Calu3 (cell line): ENCODE measurements at regions of chr21 and their contacts with region 1.

Region 1: DNA sequence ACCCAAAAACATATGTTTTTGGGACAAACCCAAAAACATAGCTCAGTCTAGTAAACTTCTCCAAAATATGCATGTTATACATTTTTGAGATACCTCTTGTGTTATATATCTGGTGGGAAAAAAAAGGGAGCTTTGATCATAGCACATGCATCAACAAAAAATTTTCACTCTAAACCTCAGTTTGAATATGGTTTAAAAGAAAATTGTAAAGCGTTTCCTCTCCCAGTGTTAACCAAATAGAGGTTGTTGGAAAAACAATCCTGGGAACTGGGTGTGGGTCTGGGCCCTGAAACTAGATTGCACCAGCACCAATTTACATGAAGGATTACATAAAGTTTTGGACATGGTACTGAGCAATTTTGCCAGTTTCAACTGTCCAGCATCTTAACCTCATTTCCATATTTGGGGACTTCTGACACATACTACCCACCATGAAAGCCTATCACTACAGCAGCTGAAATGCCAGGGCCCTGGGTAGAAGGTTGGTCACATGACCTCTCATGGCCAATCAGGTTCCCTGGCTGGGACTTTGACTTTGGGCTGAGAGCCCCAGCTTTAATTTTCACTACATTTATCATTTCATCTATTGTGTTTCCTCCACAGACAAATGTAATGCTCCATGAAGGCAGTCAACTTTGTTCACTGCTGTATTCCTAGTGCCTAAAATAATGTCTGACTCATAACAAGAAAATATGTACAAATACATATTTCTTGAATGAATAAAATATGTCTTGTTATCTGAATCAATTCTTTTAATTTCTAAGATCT is 150.7 kb downstream of the SETD4 start:
- DNase-seq: no peak
- H3K4me3 Mint-ChIP-seq: no peak overlapping the region
- H3K27ac Mint-ChIP-seq: no peak overlapping the region
- H3K4me1 Mint-ChIP-seq: peaks cover 18% of the 10 kb centered on the region
- H3K27me3 Mint-ChIP-seq: peaks cover 6% of the 10 kb centered on the region
- CTCF ChIP-seq: no peak

Region 2: GRCh38 chr21:35850029-35850428 is 59.6 kb before region 1 on chr21:
- CTCF ChIA-PET with region 1: no interaction called
- intact Hi-C with region 1: no loop called
- DNase-seq: no peak
- H3K4me3 Mint-ChIP-seq: no peak overlapping the region
- H3K27ac Mint-ChIP-seq: no peak overlapping the region
- H3K4me1 Mint-ChIP-seq: no peaks in the 10 kb centered on the region
- H3K27me3 Mint-ChIP-seq: peaks cover 45% of the 10 kb centered on the region
- CTCF ChIP-seq: no peak

Region 3: DNA sequence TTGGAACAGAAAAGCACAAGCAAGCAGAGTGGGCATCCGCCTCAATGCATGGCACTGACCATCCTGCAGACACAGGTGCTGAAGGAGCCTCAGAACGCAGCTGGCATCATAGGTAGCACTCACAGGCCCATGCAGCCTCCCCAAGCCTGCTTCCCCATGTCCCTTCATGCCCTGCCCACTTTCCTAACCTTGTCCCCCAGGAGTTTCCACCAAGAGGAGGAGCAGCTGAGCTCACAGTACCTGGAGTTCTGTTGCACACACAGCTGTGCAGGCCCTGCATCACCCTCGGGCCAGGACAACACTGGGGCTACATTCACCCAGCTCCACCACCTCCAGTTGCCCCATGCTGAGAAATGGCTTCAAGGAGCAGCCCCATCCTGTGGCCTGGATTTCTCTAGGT is 67.3 kb after region 1 on chr21:
- CTCF ChIA-PET with region 1: no interaction called
- intact Hi-C with region 1: no loop called
- DNase-seq: no peak
- H3K4me3 Mint-ChIP-seq: no peak overlapping the region
- H3K27ac Mint-ChIP-seq: no peak overlapping the region
- H3K4me1 Mint-ChIP-seq: peaks cover 8% of the 10 kb centered on the region
- H3K27me3 Mint-ChIP-seq: no peaks in the 10 kb centered on the region
- CTCF ChIP-seq: no peak

Region 4: GRCh38 chr21:35989138-35989735 is 79.6 kb after region 1 on chr21:
- CTCF ChIA-PET with region 1: no interaction called
- intact Hi-C with region 1: loop called (anchors 2 kb)
- DNase-seq: no peak
- H3K4me3 Mint-ChIP-seq: no peak overlapping the region
- H3K27ac Mint-ChIP-seq: no peak overlapping the region
- H3K4me1 Mint-ChIP-seq: peaks cover 8% of the 10 kb centered on the region
- H3K27me3 Mint-ChIP-seq: no peaks in the 10 kb centered on the region
- CTCF ChIP-seq: no peak